GM10248 (cell line): ENCODE measurements at regions of chr12 and their contacts with region 1.

Region 1: DNA sequence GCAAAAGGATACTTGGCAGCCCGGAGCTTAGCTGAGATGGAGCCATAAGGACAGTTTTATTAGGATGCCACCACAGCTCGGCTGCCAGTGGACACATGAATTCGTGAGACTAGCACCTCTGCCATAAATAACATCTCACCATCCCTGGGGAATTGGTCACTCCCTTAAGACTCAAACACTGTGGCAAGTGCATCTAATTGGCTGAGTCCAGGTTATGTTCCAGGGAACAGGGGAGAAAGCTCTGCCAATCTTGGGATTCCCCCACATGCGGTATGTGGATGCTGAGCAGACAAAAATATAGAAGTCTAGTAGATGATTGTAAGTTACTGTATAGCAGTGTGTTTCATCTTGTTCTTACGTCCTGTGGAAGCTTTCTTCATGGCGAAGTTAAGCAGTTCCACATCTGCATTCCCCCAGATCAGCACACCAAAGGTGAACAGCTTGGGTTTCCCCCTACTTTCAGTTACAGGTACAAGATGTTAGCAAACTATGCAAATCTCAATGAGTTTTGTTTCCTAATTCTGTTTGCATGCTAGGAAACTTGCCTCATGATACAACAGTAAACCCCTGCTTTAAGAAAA is 131.1 kb downstream of the ETV6 start:
- DNase-seq: peak; percentile 41
- CTCF ChIP-seq: no peak

Region 2: GRCh38 chr12:11732023-11732422 is 48.6 kb before region 1 on chr12:
- CTCF ChIA-PET with region 1: no interaction called
- POLR2A ChIA-PET with region 1: no interaction called
- DNase-seq: no peak
- CTCF ChIP-seq: no peak

Region 3: GRCh38 chr12:11765817-11766794 is 14.5 kb before region 1 on chr12:
- CTCF ChIA-PET with region 1: interaction called, 32 read pairs
- POLR2A ChIA-PET with region 1: interaction called, 4 read pairs
- DNase-seq: peak; percentile 64
- CTCF ChIP-seq: no peak

Region 4: GRCh38 chr12:11959117-11959823 is 178.7 kb after region 1 on chr12:
- CTCF ChIA-PET with region 1: no interaction called
- POLR2A ChIA-PET with region 1: no interaction called
- DNase-seq: no peak
- CTCF ChIP-seq: no peak

Region 5: DNA sequence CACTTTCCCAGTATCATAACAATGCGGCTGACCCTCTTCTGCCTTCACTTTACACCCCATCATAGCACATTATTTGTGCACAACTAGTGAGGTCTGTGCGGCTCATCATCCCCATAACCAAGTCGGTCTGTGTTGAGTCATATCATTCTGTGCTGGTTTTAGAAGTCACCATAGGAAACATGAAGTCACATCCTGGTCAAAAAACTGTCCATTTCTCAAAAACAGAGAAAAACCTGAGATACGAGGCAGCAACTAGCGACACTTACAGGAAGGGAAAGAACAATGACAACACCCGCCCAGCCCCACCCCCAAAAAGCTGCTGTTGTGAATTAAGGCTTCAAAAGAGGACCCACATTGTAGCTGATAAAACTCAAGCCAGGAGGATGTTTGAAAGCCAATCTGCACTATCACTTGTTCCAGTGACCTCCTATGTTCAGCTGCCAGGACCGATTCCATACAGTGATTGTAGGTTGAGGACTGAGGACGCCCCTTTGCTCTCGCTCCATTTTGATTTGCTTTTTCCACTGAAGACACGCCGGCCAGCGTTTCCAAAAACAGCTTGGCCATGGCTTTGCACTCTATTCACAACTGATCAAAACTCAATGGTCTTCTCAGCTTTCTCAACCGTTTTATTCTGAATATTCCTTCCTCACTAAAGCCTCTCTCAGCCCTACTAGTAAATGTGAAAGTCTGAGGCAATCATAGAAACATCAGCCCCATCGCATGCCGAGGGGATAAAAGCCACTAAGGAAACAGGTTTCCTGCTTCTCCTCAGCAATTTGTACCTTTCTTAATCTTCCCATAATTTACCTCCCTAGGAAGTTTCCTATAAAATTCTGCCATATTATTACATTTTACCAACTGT is 694.6 kb after region 1 on chr12:
- CTCF ChIA-PET with region 1: no interaction called
- POLR2A ChIA-PET with region 1: no interaction called
- DNase-seq: peak; percentile 83
- CTCF ChIP-seq: peak; percentile 22

Region 6: GRCh38 chr12:13472690-13473089 is 1692.1 kb after region 1 on chr12:
- CTCF ChIA-PET with region 1: no interaction called
- POLR2A ChIA-PET with region 1: no interaction called
- DNase-seq: peak; percentile 61
- CTCF ChIP-seq: no peak